ENCODE measurements at regions of chr5 and their contacts with region 1.

Region 1: GRCh38 chr5:32585446-32586275 is at the start of gene SUB1:
- DNase-seq: peak; percentile 92 to 96 (median 94)
- H3K4me3 ChIP-seq: peak within 1 kb of the TSS; percentile 74
- H3K27ac ChIP-seq: peak within 1 kb of the TSS; percentile 95 to 96
- H3K4me1 ChIP-seq: peaks cover 3% of the 10 kb centered on the region
- H3K27me3 ChIP-seq: no peaks in the 10 kb centered on the region
- CTCF ChIP-seq: no peak
- EP300 ChIP-seq: no peak
- POLR2A ChIP-seq: peak; percentile 73
- total RNA-seq, gene SUB1: 112 to 180 (median 124) TPM

Region 2: GRCh38 chr5:32489791-32490582 is 95.7 kb before region 1 on chr5:
- intact Hi-C with region 1: loop called in 2 of 4 experiments (anchors 2 to 10 kb)
- DNase-seq: peak; percentile 82 to 91 (median 88)
- H3K4me3 ChIP-seq: no peak overlapping the region
- H3K27ac ChIP-seq: no peak overlapping the region
- H3K4me1 ChIP-seq: no peaks in the 10 kb centered on the region
- H3K27me3 ChIP-seq: no peaks in the 10 kb centered on the region
- CTCF ChIP-seq: peak; percentile 65 to 70 (median 68)
- EP300 ChIP-seq: no peak
- POLR2A ChIP-seq: no peak

Region 3: DNA sequence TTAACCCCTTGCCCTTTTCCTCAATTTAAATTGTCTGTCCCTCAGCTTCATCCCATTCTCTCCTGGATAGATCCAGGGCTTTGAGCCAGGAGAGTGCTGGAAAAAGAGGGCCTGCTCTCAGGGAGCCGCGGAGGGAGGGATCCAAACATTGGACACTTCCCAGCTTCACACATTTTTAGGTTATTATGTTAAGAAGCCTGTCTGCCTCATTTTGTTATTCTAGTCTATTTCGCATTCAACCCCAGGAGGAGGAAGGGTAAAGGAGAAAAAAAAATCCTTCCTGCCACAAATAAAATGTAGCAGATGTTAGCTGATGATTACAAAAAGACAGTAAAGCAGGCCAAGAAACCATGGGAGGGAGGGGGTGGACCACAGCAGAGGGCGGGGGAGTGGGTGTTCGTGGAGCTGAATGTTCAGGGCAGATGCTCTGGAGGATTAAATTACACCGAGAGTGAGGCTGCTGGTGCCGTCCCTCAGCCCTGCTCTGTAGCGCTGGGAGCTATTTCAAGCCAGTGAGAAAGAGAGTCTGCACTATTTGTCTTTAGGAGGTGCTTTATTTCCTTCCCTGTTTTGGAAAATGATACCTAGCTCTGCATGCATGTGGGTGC is 80.6 kb before region 1 on chr5:
- intact Hi-C with region 1: loop called in 1 of 4 experiments (anchors 5 kb)
- DNase-seq: peak; percentile 52 to 73 (median 59)
- H3K4me3 ChIP-seq: no peak overlapping the region
- H3K27ac ChIP-seq: peak overlapping the region in 1 of 2 donors; percentile 1
- H3K4me1 ChIP-seq: peaks cover 12% of the 10 kb centered on the region
- H3K27me3 ChIP-seq: no peaks in the 10 kb centered on the region
- CTCF ChIP-seq: no peak
- EP300 ChIP-seq: no peak
- POLR2A ChIP-seq: no peak

Measured in ovary (tissue), 10 donors.